Activated CD8-positive, alpha-beta T cell treated with anti-CD3 and anti-CD28 coated beads, Interleukin-2, amount 10 ng/mL, durations not matched to agents 7 days and 5 days (primary cell): ENCODE measurements at regions of chr2 and their contacts with region 1.

Region 1: DNA sequence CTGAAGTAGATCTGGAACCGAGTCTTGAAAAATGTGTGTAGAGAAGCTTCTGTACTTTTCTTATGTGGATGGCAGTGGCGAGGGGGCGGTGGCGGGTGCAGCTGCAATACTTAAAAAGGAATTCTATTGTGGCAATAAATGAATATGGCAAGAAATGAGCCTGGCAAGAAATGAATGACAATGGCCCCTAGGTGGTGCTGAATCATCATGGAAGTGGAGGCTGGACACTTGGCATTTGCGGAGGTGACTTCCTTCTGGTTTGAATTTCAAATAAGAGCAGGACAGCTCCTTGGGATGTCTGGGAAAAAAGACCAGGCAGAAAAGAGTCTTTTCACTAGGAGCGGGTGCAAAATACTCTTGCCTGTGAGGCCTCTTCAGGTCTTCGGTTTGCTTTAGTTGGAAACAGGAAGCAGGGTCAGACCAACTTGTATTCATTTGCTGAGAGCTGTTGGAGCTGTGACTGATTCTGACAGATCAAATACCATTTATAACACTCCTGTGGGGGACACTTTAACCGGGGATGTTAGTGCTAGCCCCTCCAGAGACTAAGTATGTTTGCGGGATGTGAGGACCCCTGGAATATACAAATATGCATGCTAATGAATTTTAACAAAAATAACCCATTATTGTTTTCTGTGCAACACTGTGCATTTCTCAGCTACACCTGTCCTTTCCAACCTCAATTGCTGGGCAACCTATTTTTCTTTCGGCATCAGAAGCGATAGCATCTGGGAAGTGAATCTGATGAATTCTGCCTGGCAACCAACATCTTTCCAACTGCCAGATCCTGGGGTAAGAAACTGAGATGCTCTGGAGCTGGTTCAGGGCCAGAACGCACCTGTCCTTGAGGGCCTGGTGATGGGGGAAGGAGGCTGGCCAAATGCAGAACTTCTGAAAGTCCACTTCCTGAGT is 35.4 kb downstream of the FASTKD2 start:
- DNase-seq: peak; percentile 67
- ATAC-seq: peak; percentile 65
- H3K4me3 Mint-ChIP-seq: peak overlapping the region; percentile 52
- H3K27ac Mint-ChIP-seq: peak overlapping the region; percentile 59
- H3K4me1 Mint-ChIP-seq: peaks cover 22% of the 10 kb centered on the region
- H3K27me3 Mint-ChIP-seq: no peaks in the 10 kb centered on the region

Region 2: GRCh38 chr2:206442833-206443734 is 357.7 kb before region 1 on chr2 and contains the start of gene ADAM23:
- CTCF ChIA-PET with region 1: no interaction called
- POLR2A ChIA-PET with region 1: no interaction called
- DNase-seq: peak; percentile 40
- ATAC-seq: peak; percentile 82
- H3K4me3 Mint-ChIP-seq: peak within 1 kb of the TSS; percentile 65
- H3K27ac Mint-ChIP-seq: peak within 1 kb of the TSS; percentile 10
- H3K4me1 Mint-ChIP-seq: peaks cover 10% of the 10 kb centered on the region
- H3K27me3 Mint-ChIP-seq: peaks cover 59% of the 10 kb centered on the region
- total RNA-seq, gene ADAM23: not detected

Region 3: GRCh38 chr2:206765242-206766056 is 35.3 kb before region 1 on chr2 and contains the starts of genes FASTKD2 and MDH1B:
- CTCF ChIA-PET with region 1: interaction called, 12 read pairs
- POLR2A ChIA-PET with region 1: interaction called, 7 read pairs
- DNase-seq: peak; percentile 88
- ATAC-seq: peak; percentile 92
- H3K4me3 Mint-ChIP-seq: peak within 1 kb of the TSS; percentile 90
- H3K27ac Mint-ChIP-seq: peak within 1 kb of the TSS; percentile 96
- H3K4me1 Mint-ChIP-seq: peaks cover 35% of the 10 kb centered on the region
- H3K27me3 Mint-ChIP-seq: no peaks in the 10 kb centered on the region
- total RNA-seq, gene FASTKD2: 20.2 to 20.8 TPM
- total RNA-seq, gene MDH1B: 0.55 to 0.57 TPM

Region 4: DNA sequence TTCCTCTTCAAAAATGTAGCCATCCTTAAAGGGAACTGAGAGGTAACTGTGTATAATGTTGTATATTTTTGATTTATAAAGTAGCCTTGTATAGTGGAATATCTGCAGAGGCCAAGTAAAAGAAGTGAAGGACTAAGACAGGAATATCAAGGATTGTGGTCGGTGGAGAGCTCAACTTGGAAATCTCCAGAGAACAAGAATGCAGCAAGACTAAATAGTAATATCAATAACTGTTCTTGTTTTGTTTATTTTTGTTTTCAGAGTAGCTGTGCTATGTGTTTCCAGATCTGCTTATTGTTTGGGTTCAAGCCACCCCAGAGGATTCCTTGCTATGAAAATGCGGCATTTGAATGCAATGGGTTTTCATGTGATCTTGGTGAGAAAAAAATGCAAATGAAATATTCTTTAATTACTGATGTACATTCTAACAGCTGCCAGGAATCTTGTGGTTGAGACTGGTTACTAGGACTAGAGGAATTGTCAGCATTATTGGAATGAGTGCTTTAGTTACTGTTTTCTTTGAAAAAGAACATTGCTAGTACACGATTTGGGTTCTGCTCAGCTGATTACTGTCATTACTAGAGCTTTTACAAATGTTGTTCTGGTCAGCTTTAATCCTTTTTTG is 10.3 kb before region 1 on chr2:
- CTCF ChIA-PET with region 1: interaction called, 28 read pairs
- POLR2A ChIA-PET with region 1: interaction called, 3 read pairs
- DNase-seq: no peak
- ATAC-seq: no peak
- H3K4me3 Mint-ChIP-seq: no peak overlapping the region
- H3K27ac Mint-ChIP-seq: no peak overlapping the region
- H3K4me1 Mint-ChIP-seq: no peaks in the 10 kb centered on the region
- H3K27me3 Mint-ChIP-seq: no peaks in the 10 kb centered on the region

Region 5: GRCh38 chr2:207073801-207074678 is 273.3 kb after region 1 on chr2:
- CTCF ChIA-PET with region 1: interaction called, 15 read pairs
- POLR2A ChIA-PET with region 1: no interaction called
- DNase-seq: peak; percentile 69
- ATAC-seq: peak; percentile 85
- H3K4me3 Mint-ChIP-seq: peak overlapping the region; percentile 66
- H3K27ac Mint-ChIP-seq: peak overlapping the region; percentile 89
- H3K4me1 Mint-ChIP-seq: peaks cover 42% of the 10 kb centered on the region
- H3K27me3 Mint-ChIP-seq: no peaks in the 10 kb centered on the region

Region 6: GRCh38 chr2:207143215-207144172 is 342.7 kb after region 1 on chr2:
- CTCF ChIA-PET with region 1: interaction called, 28 read pairs
- POLR2A ChIA-PET with region 1: no interaction called
- DNase-seq: peak; percentile 73
- ATAC-seq: peak; percentile 82
- H3K4me3 Mint-ChIP-seq: peak overlapping the region; percentile 56
- H3K27ac Mint-ChIP-seq: peak overlapping the region; percentile 92
- H3K4me1 Mint-ChIP-seq: peaks cover 54% of the 10 kb centered on the region
- H3K27me3 Mint-ChIP-seq: peaks cover 2% of the 10 kb centered on the region

Region 7: GRCh38 chr2:207166039-207166348 is 365.2 kb after region 1 on chr2:
- CTCF ChIA-PET with region 1: interaction called, 18 read pairs
- POLR2A ChIA-PET with region 1: interaction called, 4 read pairs
- DNase-seq: peak; percentile 98
- ATAC-seq: peak; percentile 95
- H3K4me3 Mint-ChIP-seq: peak overlapping the region; percentile 95
- H3K27ac Mint-ChIP-seq: peak overlapping the region; percentile 94
- H3K4me1 Mint-ChIP-seq: peaks cover 40% of the 10 kb centered on the region
- H3K27me3 Mint-ChIP-seq: peaks cover 3% of the 10 kb centered on the region

Region 8: DNA sequence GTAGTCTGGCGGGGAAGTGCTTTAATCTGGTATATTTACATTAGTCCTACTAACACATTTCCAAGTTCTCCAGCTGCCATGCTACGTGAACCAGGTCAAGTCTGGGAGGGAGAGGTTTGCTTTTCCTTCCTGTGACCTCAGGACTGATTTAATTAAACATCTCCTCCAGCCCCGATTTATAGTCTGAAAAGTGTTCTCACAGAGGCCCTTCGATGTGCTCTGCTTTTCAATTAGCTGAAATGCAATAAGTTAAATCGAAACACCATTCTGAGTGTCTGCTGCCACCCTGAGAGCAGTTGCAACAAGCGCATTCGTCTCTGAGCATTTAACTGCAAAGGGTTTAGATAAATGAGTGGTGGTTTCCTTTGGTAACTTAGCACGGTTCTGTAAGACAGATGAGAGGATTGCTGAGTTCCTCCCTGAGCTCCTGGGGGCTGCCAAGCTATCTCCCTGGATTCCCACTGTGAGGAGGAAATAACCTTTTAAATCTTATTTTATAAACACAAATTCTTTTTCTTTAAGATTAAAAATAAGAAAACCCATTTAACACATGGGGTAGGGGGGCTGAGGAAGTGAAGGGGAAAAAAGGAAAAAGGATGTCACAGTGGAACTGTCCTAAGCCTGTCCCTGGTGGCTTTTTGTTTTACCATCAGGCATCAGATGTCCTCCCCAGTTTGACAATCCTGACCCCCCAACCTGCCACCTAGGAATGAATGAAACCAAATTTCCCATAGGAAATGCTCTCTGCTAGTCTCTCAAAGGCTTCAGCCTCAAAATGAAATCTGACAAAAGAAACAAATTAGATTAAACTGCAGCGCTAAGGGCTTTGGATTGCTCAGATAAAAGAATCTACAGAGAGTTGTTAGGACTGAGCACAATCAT is 672.5 kb after region 1 on chr2:
- CTCF ChIA-PET with region 1: interaction called, 55 read pairs
- POLR2A ChIA-PET with region 1: no interaction called
- DNase-seq: peak; percentile 67
- ATAC-seq: peak; percentile 72
- H3K4me3 Mint-ChIP-seq: no peak overlapping the region
- H3K27ac Mint-ChIP-seq: no peak overlapping the region
- H3K4me1 Mint-ChIP-seq: peaks cover 22% of the 10 kb centered on the region
- H3K27me3 Mint-ChIP-seq: peaks cover 2% of the 10 kb centered on the region